Ovary (tissue), 10 donors: ENCODE measurements at regions of chr11 and their contacts with region 1.

Region 1: DNA sequence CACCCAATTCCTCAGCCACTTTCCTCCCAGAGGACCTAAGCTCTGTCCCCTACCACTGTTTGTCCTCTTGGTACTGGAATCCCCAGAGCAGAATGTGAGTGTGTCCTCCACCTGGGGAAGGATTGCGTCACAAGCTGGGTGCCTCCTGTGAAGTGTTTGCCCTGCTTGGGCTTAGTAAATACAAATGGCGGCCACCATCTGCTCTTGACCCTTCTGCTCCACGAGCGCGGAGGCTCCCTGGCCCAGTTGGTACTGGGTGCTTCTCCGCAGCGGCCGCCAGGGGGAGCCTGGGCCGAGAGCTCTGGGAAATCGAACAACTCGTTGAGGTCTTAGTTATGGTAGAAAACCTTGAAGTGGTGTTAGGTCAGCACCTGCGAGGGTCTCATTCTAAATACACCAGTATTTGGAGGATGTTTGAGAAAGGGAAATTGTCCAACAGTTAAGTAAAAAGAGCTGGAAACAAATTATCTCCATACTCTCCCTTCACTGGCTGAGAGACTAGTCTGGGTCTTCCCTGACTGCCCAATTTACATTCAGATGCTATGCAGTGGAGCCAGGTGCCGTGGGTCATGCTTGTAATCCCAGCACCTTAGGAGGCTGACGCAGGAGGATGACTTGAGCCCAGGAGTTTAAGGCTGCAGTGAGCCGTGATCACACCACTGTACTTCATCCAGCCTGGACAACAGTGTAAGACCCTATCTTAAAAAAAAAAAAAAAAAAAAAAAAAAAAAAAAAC is 74.6 kb upstream of the TEAD1 start:
- DNase-seq: peak in 4 of 5 donors; percentile 34 to 48 (median 38)
- H3K4me3 ChIP-seq: no peak overlapping the region
- H3K27ac ChIP-seq: no peak overlapping the region
- H3K4me1 ChIP-seq: no peaks in the 10 kb centered on the region
- H3K27me3 ChIP-seq: no peaks in the 10 kb centered on the region
- CTCF ChIP-seq: peak in 1 of 3 donors; percentile 25
- EP300 ChIP-seq: no peak
- POLR2A ChIP-seq: no peak

Region 2: GRCh38 chr11:11641581-11641980 is 958.0 kb before region 1 on chr11:
- intact Hi-C with region 1: loop called in 1 of 4 experiments (anchors 10 kb)
- DNase-seq: no peak
- H3K4me3 ChIP-seq: no peak overlapping the region
- H3K27ac ChIP-seq: no peak overlapping the region
- H3K4me1 ChIP-seq: no peaks in the 10 kb centered on the region
- H3K27me3 ChIP-seq: no peaks in the 10 kb centered on the region
- CTCF ChIP-seq: no peak
- EP300 ChIP-seq: no peak
- POLR2A ChIP-seq: no peak

Region 3: GRCh38 chr11:12569499-12570040 is 30.0 kb before region 1 on chr11:
- intact Hi-C with region 1: loop called in 1 of 4 experiments (anchors 1 kb)
- DNase-seq: no peak
- H3K4me3 ChIP-seq: no peak overlapping the region
- H3K27ac ChIP-seq: no peak overlapping the region
- H3K4me1 ChIP-seq: peaks cover 1% of the 10 kb centered on the region
- H3K27me3 ChIP-seq: no peaks in the 10 kb centered on the region
- CTCF ChIP-seq: no peak
- EP300 ChIP-seq: no peak
- POLR2A ChIP-seq: no peak

Region 4: GRCh38 chr11:13152736-13153533 is 553.4 kb after region 1 on chr11:
- intact Hi-C with region 1: no loop called
- DNase-seq: no peak
- H3K4me3 ChIP-seq: no peak overlapping the region
- H3K27ac ChIP-seq: no peak overlapping the region
- H3K4me1 ChIP-seq: no peaks in the 10 kb centered on the region
- H3K27me3 ChIP-seq: no peaks in the 10 kb centered on the region
- CTCF ChIP-seq: no peak
- EP300 ChIP-seq: no peak
- POLR2A ChIP-seq: no peak